SK-N-SH (cell line): ENCODE measurements at regions of chr3 and their contacts with region 1.

Region 1: GRCh38 chr3:153768561-153769469 is 352.4 kb upstream of the ARHGEF26 start:
- DNase-seq: peak; percentile 40
- H3K4me3 ChIP-seq: peak overlapping the region in 1 of 2 experiments; percentile 8; a peak in 1 of 4 replicates
- H3K27ac ChIP-seq: no peak overlapping the region
- H3K4me1 ChIP-seq: no peaks in the 10 kb centered on the region
- H3K27me3 ChIP-seq: no peaks in the 10 kb centered on the region
- CTCF ChIP-seq: peak; percentile 80
- EP300 ChIP-seq: no peak
- RAD21 ChIP-seq: peak; percentile 83

Region 2: DNA sequence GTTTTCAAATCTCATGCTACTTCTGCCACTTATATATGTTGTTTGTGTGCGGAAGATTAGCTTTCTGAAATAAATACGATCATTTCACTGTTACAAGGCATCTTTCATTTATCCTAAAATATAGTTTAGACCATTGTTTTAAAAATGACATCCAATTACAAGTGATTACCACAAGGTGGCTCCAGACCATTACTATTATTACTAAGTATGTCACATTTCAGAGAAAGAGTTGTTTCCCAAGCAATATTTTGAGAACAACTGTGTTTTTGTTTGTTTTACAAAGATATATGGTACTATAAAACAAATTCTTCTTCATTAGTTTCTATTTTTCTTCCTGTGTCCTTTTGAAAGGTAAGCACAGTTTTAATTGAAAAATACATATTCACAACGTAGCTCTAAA is 742.8 kb before region 1 on chr3:
- CTCF ChIA-PET with region 1: interaction called, 11 read pairs
- POLR2A ChIA-PET with region 1: no interaction called
- DNase-seq: peak; percentile 9
- H3K4me3 ChIP-seq: no peak overlapping the region; a peak in 1 of 4 replicates
- H3K27ac ChIP-seq: no peak overlapping the region
- H3K4me1 ChIP-seq: 0 out of 4 replicates have a peak, but pooled peaks cover 0 to 8% of the 10 kb centered on the region in 2 experiments
- H3K27me3 ChIP-seq: no peaks in the 10 kb centered on the region; the same call in 1 of the 2 replicates
- CTCF ChIP-seq: peak; percentile 85
- EP300 ChIP-seq: no peak
- RAD21 ChIP-seq: peak; percentile 70

Region 3: GRCh38 chr3:153756816-153757215 is 12.0 kb before region 1 on chr3:
- CTCF ChIA-PET with region 1: interaction called, 12 read pairs
- POLR2A ChIA-PET with region 1: no interaction called
- DNase-seq: no peak
- H3K4me3 ChIP-seq: no peak overlapping the region
- H3K27ac ChIP-seq: no peak overlapping the region
- H3K4me1 ChIP-seq: no peaks in the 10 kb centered on the region
- H3K27me3 ChIP-seq: no peaks in the 10 kb centered on the region
- CTCF ChIP-seq: no peak
- EP300 ChIP-seq: no peak
- RAD21 ChIP-seq: no peak